ENCODE measurements at regions of chr16 and their contacts with region 1.

Region 1: DNA sequence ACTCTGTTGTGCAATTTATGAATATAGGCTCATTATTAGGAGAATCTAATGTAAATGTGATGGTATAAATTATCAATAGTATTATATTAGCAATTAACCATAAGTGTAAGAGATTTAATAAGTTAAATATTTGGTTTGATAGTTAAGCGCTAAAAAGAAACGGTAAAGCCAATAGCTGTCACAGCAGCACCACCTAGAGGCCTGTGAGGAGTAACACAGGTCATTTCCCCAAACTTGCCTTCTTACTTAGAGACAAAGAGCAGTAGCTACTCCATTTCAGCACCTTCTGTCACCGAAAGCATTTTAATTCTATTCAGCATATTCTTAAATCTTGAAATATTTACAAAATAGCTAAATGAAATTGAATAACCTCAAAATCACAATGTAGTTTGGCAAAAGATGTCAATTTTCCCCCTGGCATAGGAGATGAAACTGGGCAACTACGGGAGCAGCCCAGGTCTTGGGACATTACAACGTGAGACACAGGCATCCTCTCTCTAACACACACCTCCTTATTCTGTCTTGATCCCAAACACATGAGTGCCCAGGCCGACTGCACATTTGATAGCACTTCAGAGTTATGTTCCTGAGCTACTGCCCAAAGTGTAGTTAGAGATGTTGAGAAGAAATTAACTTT is 14.2 kb upstream of the DYNLRB2 start:
- DNase-seq: peak; percentile 66
- H3K4me3 ChIP-seq: no peak overlapping the region
- H3K27ac ChIP-seq: no peak overlapping the region
- H3K4me1 ChIP-seq: no peaks in the 10 kb centered on the region
- H3K27me3 ChIP-seq: peaks cover 6 to 26% of the 10 kb centered on the region in 2 experiments
- CTCF ChIP-seq: peak; percentile 63 to 75
- POLR2A ChIP-seq: no peak

Region 2: GRCh38 chr16:80466024-80466987 is 60.2 kb before region 1 on chr16:
- CTCF ChIA-PET with region 1: interaction called, 14 read pairs
- POLR2A ChIA-PET with region 1: no interaction called
- dilution Hi-C with region 1: no loop called
- intact Hi-C with region 1: no loop called
- DNase-seq: peak; percentile 39
- H3K4me3 ChIP-seq: no peak overlapping the region
- H3K27ac ChIP-seq: no peak overlapping the region
- H3K4me1 ChIP-seq: no peaks in the 10 kb centered on the region
- H3K27me3 ChIP-seq: no peaks in the 10 kb centered on the region
- CTCF ChIP-seq: peak; percentile 78 to 84
- POLR2A ChIP-seq: no peak

Region 3: DNA sequence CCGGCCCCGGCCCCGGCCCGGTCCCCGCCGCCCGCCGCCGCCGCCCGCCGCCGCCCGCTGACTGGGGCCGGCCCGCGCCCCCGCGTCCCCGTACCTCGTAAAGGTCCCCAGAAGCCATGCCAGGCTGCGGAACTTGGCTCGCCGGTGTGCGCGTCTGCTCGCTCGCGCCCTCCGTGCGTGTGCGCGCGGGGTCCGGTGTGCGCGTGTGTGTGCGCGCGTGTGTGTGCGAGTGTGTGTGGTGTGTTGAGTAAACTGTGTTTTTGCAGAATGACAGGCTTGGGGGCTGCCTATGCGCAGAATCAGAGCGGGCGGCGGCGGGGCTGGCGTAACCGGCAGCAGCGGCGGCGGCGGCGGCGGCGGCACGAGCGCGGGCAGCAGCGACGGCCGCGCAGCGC is 277.5 kb after region 1 on chr16:
- CTCF ChIA-PET with region 1: interaction called, 27 read pairs
- POLR2A ChIA-PET with region 1: no interaction called
- dilution Hi-C with region 1: no loop called
- intact Hi-C with region 1: no loop called
- DNase-seq: peak; percentile 51
- H3K4me3 ChIP-seq: peak overlapping the region; percentile 43 to 93 (median 50)
- H3K27ac ChIP-seq: peak overlapping the region; percentile 70
- H3K4me1 ChIP-seq: peaks cover 35% of the 10 kb centered on the region
- H3K27me3 ChIP-seq: no peaks in the 10 kb centered on the region
- CTCF ChIP-seq: no peak
- POLR2A ChIP-seq: no peak

Region 4: DNA sequence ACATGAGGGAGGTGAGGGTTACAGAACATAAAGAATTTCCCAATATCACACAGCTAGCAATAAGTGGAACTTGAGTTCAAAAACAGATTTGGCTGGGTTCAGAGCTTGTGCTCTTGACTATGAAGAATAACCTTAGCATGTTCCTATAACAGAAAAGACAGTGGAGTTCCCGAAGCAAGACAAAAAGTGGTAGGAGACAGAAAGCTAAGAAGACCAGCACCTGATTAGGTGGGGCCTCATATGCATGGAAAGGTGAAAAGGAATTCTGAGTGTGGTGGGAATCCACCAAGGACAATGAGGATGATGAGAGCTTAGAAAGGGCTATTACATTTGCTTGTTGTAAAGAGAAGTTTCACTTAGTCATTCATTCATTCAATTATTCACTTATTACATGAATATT is 304.5 kb after region 1 on chr16:
- CTCF ChIA-PET with region 1: interaction called, 91 read pairs
- POLR2A ChIA-PET with region 1: no interaction called
- dilution Hi-C with region 1: no loop called
- intact Hi-C with region 1: no loop called
- DNase-seq: no peak
- H3K4me3 ChIP-seq: no peak overlapping the region
- H3K27ac ChIP-seq: no peak overlapping the region
- H3K4me1 ChIP-seq: no peaks in the 10 kb centered on the region
- H3K27me3 ChIP-seq: peaks cover 0 to 2% of the 10 kb centered on the region in 2 experiments
- CTCF ChIP-seq: no peak
- POLR2A ChIP-seq: no peak

Region 5: GRCh38 chr16:80948886-80949493 is 422.4 kb after region 1 on chr16:
- CTCF ChIA-PET with region 1: interaction called, 10 read pairs
- POLR2A ChIA-PET with region 1: no interaction called
- dilution Hi-C with region 1: no loop called
- intact Hi-C with region 1: no loop called
- DNase-seq: peak; percentile 73
- H3K4me3 ChIP-seq: no peak overlapping the region
- H3K27ac ChIP-seq: peak overlapping the region; percentile 54
- H3K4me1 ChIP-seq: peaks cover 8% of the 10 kb centered on the region
- H3K27me3 ChIP-seq: no peaks in the 10 kb centered on the region
- CTCF ChIP-seq: peak; percentile 82 to 83
- POLR2A ChIP-seq: no peak

Region 6: DNA sequence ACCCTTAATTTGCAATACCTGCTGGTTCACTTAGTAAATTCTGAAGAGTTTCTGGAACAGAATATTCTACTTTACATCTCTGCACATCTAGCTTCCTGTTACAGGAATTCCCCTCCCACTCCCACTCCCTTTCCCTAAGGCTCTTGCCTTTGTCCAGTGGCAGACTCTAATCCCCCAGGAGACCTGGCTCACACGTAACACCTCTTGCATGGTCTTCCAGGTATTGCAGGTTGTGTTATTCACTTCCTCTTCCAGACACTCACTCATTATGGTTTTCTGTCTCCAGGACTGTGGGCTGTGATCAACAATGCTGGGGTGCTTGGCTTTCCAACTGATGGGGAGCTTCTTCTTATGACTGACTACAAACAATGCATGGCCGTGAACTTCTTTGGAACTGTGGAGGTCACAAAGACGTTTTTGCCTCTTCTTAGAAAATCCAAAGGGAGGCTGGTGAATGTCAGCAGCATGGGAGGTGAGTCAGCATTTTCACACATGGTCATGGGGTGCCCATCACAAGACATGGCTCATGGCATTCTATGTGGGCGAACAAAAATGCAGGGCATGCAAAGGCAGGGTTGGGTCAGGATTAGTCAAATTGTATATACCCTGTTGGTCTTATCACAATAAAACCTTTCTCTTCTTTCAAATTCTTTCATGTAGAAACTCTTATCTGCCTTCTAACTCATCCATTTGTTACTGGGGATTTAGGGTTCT is 1544.3 kb after region 1 on chr16:
- CTCF ChIA-PET with region 1: no interaction called
- POLR2A ChIA-PET with region 1: no interaction called
- dilution Hi-C with region 1: no loop called
- intact Hi-C with region 1: no loop called
- DNase-seq: no peak
- H3K4me3 ChIP-seq: no peak overlapping the region
- H3K27ac ChIP-seq: no peak overlapping the region
- H3K4me1 ChIP-seq: no peaks in the 10 kb centered on the region
- H3K27me3 ChIP-seq: peaks cover 0 to 7% of the 10 kb centered on the region in 2 experiments
- CTCF ChIP-seq: no peak
- POLR2A ChIP-seq: no peak